ENCODE measurements at regions of chr20 and their contacts with region 1.

Region 1: DNA sequence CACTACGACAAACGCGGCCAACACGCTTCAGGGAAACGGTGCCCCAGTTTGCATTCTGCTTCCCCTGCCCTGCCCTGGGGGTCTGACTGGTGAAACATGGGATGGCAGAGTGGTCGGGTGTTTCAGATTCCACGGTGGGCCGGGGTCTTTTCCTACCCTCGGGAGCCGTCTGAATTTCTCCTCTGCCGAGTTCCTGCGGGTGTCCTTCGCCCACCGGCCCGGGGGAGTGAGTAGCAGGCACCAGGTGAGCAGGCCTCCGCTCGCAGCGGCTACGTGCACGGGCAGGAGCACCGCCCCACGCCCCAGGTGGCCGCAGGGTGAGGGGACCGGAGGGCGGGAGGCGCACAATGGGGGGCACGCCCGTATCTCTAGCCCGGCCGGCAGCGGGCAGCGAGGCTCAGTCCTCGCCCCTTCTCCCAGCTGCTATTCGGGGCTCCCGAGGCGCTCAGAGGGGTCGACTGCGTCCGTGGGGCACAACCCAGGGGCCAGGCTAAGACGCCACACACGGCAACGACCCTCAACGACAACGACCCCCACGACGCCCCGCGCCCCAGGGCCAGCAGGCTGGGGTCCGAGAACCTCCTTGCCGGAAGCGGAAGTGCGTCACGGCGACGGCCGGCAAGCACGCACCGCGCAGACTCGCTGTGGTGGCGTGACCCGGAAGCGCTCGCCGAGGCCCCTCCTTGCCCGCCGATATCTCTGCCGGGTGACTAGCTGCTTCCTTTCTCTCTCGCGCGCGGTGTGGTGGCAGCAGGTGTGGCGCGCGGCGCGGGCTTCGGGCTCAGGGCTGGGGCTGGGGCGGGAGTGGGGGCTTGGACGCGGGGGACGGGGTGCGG is at the start of gene RPS21:
- DNase-seq: peak; percentile 86 to 97 (median 94)
- ATAC-seq: peak; percentile 88
- H3K4me3 ChIP-seq: peak within 1 kb of the TSS; percentile 93 to 96
- H3K4me3 Mint-ChIP-seq: peak within 1 kb of the TSS; percentile 91
- H3K27ac ChIP-seq: peak within 1 kb of the TSS; percentile 96 to 98
- H3K27ac Mint-ChIP-seq: peak within 1 kb of the TSS; percentile 95
- H3K4me1 ChIP-seq: peaks cover 37% of the 10 kb centered on the region
- H3K4me1 Mint-ChIP-seq: peaks cover 44% of the 10 kb centered on the region
- H3K27me3 ChIP-seq: no peaks in the 10 kb centered on the region
- H3K27me3 Mint-ChIP-seq: no peaks in the 10 kb centered on the region
- CTCF ChIP-seq: no peak
- total RNA-seq, gene RPS21: 3,441 to 3,445 TPM

Region 2: GRCh38 chr20:62010551-62011402 is 375.8 kb before region 1 on chr20:
- CTCF ChIA-PET with region 1: interaction called, 4 read pairs
- POLR2A ChIA-PET with region 1: no interaction called
- intact Hi-C with region 1: loop called in 1 of 2 experiments (anchors 1 kb)
- DNase-seq: peak; percentile 35 to 79 (median 68)
- ATAC-seq: peak; percentile 86
- H3K4me3 ChIP-seq: no peak overlapping the region
- H3K4me3 Mint-ChIP-seq: no peak overlapping the region
- H3K27ac ChIP-seq: no peak overlapping the region
- H3K27ac Mint-ChIP-seq: no peak overlapping the region
- H3K4me1 ChIP-seq: no peaks in the 10 kb centered on the region
- H3K4me1 Mint-ChIP-seq: peaks cover 9% of the 10 kb centered on the region
- H3K27me3 ChIP-seq: no peaks in the 10 kb centered on the region
- H3K27me3 Mint-ChIP-seq: no peaks in the 10 kb centered on the region
- CTCF ChIP-seq: peak; percentile 89

Region 3: GRCh38 chr20:62143118-62143973 is 243.3 kb before region 1 on chr20 and contains the starts of genes PSMA7 and SS18L1:
- CTCF ChIA-PET with region 1: no interaction called
- POLR2A ChIA-PET with region 1: no interaction called
- intact Hi-C with region 1: loop called (anchors 5 kb)
- DNase-seq: peak; percentile 65 to 95 (median 85)
- ATAC-seq: peak; percentile 83
- H3K4me3 ChIP-seq: peak within 1 kb of the TSS; percentile 59 to 60
- H3K4me3 Mint-ChIP-seq: peak within 1 kb of the TSS; percentile 92
- H3K27ac ChIP-seq: peak within 1 kb of the TSS; percentile 58 to 83
- H3K27ac Mint-ChIP-seq: peak within 1 kb of the TSS; percentile 93
- H3K4me1 ChIP-seq: peaks cover 37% of the 10 kb centered on the region
- H3K4me1 Mint-ChIP-seq: peaks cover 50% of the 10 kb centered on the region
- H3K27me3 ChIP-seq: no peaks in the 10 kb centered on the region
- H3K27me3 Mint-ChIP-seq: no peaks in the 10 kb centered on the region
- CTCF ChIP-seq: no peak
- total RNA-seq, gene PSMA7: 170 to 179 TPM
- total RNA-seq, gene SS18L1: 12.6 to 12.9 TPM

Region 4: DNA sequence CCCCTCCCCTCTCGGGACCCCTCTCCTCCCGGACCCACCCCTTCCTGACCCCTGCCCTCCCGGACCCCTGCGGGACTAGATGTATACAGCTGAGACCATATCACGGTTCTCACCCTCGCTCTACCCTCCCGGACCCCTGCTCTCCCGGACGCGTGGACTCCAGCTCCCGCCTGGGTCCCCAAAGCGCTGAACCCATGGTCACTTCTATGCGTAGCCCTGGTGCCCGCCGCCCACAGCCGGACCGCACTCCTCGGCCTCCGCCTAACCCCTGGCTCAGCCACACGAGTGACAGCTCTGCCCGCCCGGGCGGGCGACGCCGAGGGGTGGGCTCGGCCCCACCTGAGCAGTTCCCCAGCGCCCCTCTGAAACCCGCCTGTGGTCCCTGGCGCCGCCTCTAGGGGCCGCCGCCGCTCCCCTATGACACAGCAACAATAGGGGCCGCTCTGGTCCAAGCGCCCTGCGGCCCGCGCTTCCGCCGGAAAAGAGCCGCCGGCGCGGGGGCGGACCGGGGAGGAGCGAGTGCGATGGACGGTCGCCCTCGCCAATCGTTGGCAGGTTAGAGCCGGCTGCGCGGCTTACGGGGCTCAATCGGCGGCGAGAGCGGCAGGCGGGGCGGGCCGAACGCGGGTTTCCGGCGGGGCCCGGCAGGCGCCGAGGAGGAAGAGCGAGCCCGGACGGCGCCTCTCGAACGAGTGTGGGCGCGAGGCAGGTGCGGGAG is 84.1 kb before region 1 on chr20 and contains the start of gene ADRM1:
- CTCF ChIA-PET with region 1: interaction called, 4 read pairs
- POLR2A ChIA-PET with region 1: interaction called, 3 read pairs
- intact Hi-C with region 1: loop called (anchors 1 kb)
- DNase-seq: peak; percentile 93 to 98 (median 95)
- ATAC-seq: peak; percentile 85
- H3K4me3 ChIP-seq: peak within 1 kb of the TSS; percentile 79 to 92
- H3K4me3 Mint-ChIP-seq: peak within 1 kb of the TSS; percentile 93
- H3K27ac ChIP-seq: peak within 1 kb of the TSS; percentile 82 to 88
- H3K27ac Mint-ChIP-seq: peak within 1 kb of the TSS; percentile 97
- H3K4me1 ChIP-seq: peaks cover 26% of the 10 kb centered on the region
- H3K4me1 Mint-ChIP-seq: peaks cover 27% of the 10 kb centered on the region
- H3K27me3 ChIP-seq: no peaks in the 10 kb centered on the region
- H3K27me3 Mint-ChIP-seq: no peaks in the 10 kb centered on the region
- CTCF ChIP-seq: peak; percentile 88
- total RNA-seq, gene ADRM1: 52.7 to 52.9 TPM

Region 5: DNA sequence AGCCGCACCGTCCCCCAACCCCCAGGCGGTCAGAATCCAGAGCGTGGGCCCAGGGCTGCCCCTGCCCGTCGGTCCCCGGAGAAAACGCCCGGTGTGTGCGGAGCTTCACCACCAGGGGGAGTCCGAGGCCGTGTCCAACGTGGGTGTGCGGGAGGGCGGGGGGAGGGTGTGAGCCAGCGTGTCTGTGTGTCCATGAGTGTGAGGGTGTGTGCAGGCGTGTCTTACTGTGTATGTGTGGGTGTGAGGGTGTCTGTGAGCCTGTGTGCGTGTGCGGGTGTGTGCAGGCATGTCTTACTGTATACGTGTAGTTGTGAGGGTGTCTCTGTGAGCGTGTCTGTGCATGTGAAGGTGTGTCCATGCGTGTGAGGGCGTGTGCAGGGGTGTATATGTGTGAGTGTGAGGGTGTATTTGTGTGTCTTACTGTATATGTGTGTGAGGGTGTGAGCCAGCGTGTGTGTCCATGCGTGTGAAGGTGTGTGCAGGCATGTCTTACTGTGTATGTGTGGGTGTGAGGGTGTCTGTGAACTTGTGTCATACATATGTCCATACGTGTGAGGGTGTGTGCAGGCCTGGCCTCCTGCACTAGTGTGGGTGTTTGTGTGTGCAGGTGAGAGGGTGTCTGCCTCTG is 113.8 kb after region 1 on chr20:
- CTCF ChIA-PET with region 1: no interaction called
- POLR2A ChIA-PET with region 1: no interaction called
- intact Hi-C with region 1: no loop called
- DNase-seq: peak; percentile 62 to 88 (median 82)
- ATAC-seq: peak; percentile 64
- H3K4me3 ChIP-seq: no peak overlapping the region
- H3K4me3 Mint-ChIP-seq: no peak overlapping the region
- H3K27ac ChIP-seq: no peak overlapping the region
- H3K27ac Mint-ChIP-seq: no peak overlapping the region
- H3K4me1 ChIP-seq: peaks cover 7% of the 10 kb centered on the region
- H3K4me1 Mint-ChIP-seq: peaks cover 11% of the 10 kb centered on the region
- H3K27me3 ChIP-seq: no peaks in the 10 kb centered on the region
- H3K27me3 Mint-ChIP-seq: peaks cover 2% of the 10 kb centered on the region
- CTCF ChIP-seq: peak; percentile 76

Region 6: DNA sequence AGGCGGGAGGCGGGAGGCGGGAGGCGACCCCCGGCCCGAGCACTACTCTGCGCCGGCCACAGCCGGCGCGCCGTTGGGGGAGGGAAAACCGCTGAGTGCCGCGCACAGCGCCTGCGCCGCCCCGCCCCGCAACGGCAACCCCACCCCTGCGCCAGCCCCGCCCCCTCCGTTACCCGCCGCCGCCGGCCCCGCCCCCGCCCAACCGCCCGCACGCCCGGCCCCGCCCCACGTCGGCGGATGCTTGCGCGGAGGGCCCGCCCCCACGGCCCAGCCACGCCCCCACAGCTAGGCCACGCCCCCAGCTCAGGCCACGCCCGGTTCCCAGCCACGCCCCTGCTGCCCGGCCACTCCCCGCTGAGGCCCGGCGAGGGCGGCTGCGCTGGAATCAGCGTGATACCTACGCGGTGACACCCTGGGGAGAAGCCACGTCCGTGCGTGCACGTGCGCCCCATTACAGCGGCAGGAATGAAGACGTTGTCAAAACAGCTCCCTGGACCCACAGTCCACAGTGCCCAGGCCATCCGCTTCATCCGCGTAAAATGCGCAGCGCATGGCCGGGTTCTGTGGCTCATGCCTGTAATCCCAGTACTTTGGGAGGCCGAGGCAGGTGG is 475.2 kb after region 1 on chr20 and contains the start of gene TCFL5:
- CTCF ChIA-PET with region 1: no interaction called
- POLR2A ChIA-PET with region 1: no interaction called
- intact Hi-C with region 1: loop called in 1 of 2 experiments (anchors 2 kb)
- DNase-seq: peak; percentile 88 to 99 (median 93)
- ATAC-seq: peak; percentile 90
- H3K4me3 ChIP-seq: peak within 1 kb of the TSS; percentile 20 to 26
- H3K4me3 Mint-ChIP-seq: peak within 1 kb of the TSS; percentile 77
- H3K27ac ChIP-seq: peak within 1 kb of the TSS in 1 of 2 experiments; percentile 56
- H3K27ac Mint-ChIP-seq: peak within 1 kb of the TSS; percentile 88
- H3K4me1 ChIP-seq: peaks cover 15% of the 10 kb centered on the region
- H3K4me1 Mint-ChIP-seq: peaks cover 20% of the 10 kb centered on the region
- H3K27me3 ChIP-seq: no peaks in the 10 kb centered on the region
- H3K27me3 Mint-ChIP-seq: no peaks in the 10 kb centered on the region
- CTCF ChIP-seq: no peak
- total RNA-seq, gene TCFL5: 4.3 to 4.8 TPM

Region 7: GRCh38 chr20:63216041-63216848 is 829.6 kb after region 1 on chr20 and contains the start of gene YTHDF1:
- CTCF ChIA-PET with region 1: no interaction called
- POLR2A ChIA-PET with region 1: no interaction called
- intact Hi-C with region 1: loop called in 1 of 2 experiments (anchors 10 kb)
- DNase-seq: peak; percentile 86 to 98 (median 95)
- ATAC-seq: peak; percentile 96
- H3K4me3 ChIP-seq: peak within 1 kb of the TSS; percentile 68 to 84
- H3K4me3 Mint-ChIP-seq: peak within 1 kb of the TSS; percentile 91
- H3K27ac ChIP-seq: peak within 1 kb of the TSS; percentile 73 to 74
- H3K27ac Mint-ChIP-seq: peak within 1 kb of the TSS; percentile 94
- H3K4me1 ChIP-seq: peaks cover 44% of the 10 kb centered on the region
- H3K4me1 Mint-ChIP-seq: peaks cover 44% of the 10 kb centered on the region
- H3K27me3 ChIP-seq: no peaks in the 10 kb centered on the region
- H3K27me3 Mint-ChIP-seq: peaks cover 2% of the 10 kb centered on the region
- CTCF ChIP-seq: no peak
- total RNA-seq, gene YTHDF1: 44.8 to 45.7 TPM